IMR-90 (cell line): ENCODE measurements at regions of chr9 and their contacts with region 1.

Region 1: GRCh38 chr9:4077499-4078102 is 222.3 kb downstream of the GLIS3 start:
- DNase-seq: peak; percentile 70
- ATAC-seq: peak; percentile 73
- H3K4me3 ChIP-seq: no peak overlapping the region
- H3K27ac ChIP-seq: no peak overlapping the region
- H3K4me1 ChIP-seq: peaks cover 4% of the 10 kb centered on the region
- H3K27me3 ChIP-seq: no peaks in the 10 kb centered on the region
- CTCF ChIP-seq: peak; percentile 80
- POLR2A ChIP-seq: no peak
- RAD21 ChIP-seq: peak; percentile 72

Region 2: DNA sequence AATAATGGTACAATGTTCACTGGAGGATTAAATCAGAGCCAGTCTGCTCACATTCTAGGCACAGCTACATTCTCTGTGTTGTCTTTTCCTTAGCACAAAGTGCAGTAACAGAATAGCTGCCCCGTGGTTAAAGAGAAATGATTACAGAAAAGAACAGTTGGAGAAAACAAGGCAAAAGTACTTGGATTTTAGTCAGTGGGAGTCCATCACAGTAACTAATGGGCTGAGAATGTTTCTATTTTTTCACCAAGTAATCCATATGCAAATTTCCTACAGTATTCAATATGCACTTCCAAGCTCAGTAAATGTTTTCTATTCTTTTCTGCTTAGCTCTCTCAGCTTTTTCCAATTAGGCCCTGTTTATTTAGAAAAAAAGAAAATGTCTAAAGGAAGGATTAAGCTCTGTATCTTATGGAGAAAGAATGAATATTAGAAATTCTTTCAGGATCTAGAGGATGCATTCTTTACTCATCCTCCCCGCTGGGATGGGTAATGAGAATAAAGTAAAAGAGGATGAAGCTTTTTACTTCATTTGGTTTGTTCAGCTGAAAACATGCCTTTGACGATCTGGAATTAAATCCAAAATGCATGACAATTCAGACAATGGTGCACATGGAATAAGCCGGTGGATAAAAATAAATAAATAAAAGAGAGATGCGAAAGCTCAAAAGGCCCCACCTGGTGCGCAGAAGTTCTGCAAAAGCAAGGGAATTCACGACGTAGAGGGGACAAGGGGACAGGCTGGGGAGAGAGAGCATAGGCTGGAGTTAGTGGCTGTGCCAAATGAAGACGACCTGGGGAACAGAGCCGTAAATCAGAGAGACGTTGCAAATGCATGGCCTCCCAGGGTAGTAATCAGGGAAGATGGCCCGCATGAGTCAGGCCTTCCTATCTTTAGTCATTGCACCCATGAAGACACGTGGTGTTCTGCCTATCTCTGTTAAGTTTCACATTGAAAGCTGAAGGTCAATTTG is 123.0 kb before region 1 on chr9:
- CTCF ChIA-PET with region 1: no interaction called
- POLR2A ChIA-PET with region 1: no interaction called
- dilution Hi-C with region 1: no loop called
- in situ Hi-C with region 1: no loop called
- intact Hi-C with region 1: loop called (anchors 5 kb)
- DNase-seq: peak; percentile 55
- ATAC-seq: peak; percentile 61
- H3K4me3 ChIP-seq: no peak overlapping the region
- H3K27ac ChIP-seq: peak overlapping the region; percentile 92
- H3K4me1 ChIP-seq: peaks cover 16% of the 10 kb centered on the region
- H3K27me3 ChIP-seq: no peaks in the 10 kb centered on the region
- CTCF ChIP-seq: no peak
- POLR2A ChIP-seq: no peak
- RAD21 ChIP-seq: no peak